Ascending aorta (tissue), 2 donors: ENCODE measurements at regions of chr16 and their contacts with region 1.

Region 1: GRCh38 chr16:77599793-77600415 is 122.4 kb upstream of the NUDT7 start:
- DNase-seq: no peak
- H3K4me3 ChIP-seq: no peak overlapping the region
- H3K27ac ChIP-seq: no peak overlapping the region
- H3K4me1 ChIP-seq: no peaks in the 10 kb centered on the region
- H3K27me3 ChIP-seq: no peaks in the 10 kb centered on the region
- CTCF ChIP-seq: peak in 2 of 3 experiments; percentile 20 to 59

Region 2: GRCh38 chr16:77647726-77648125 is 47.8 kb after region 1 on chr16:
- intact Hi-C with region 1: no loop called
- DNase-seq: no peak
- H3K4me3 ChIP-seq: no peak overlapping the region
- H3K27ac ChIP-seq: no peak overlapping the region
- H3K4me1 ChIP-seq: no peaks in the 10 kb centered on the region
- H3K27me3 ChIP-seq: no peaks in the 10 kb centered on the region
- CTCF ChIP-seq: no peak

Region 3: DNA sequence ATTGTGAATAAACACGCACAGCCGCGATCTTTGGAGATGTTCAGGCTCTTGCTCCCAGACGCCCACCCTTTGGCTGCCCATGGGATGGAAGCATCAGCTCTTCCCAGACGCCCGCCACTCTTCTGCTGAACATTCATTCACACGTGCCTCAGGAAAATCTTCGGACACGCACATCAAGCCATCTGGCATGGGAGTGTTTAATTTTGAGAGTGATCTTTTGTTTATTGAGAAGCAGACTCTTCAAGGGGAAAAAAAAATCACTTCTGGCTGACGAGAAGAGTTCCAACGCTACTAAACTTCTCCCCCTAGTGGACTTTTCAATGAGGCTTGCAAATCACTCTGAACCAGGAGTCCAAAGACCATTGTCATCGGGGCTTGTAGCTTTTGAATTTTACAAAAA is 60.4 kb after region 1 on chr16:
- intact Hi-C with region 1: loop called (anchors 2 kb)
- DNase-seq: no peak
- H3K4me3 ChIP-seq: peak overlapping the region in 1 of 2 donors; percentile 40
- H3K27ac ChIP-seq: no peak overlapping the region
- H3K4me1 ChIP-seq: no peaks in the 10 kb centered on the region
- H3K27me3 ChIP-seq: no peaks in the 10 kb centered on the region
- CTCF ChIP-seq: peak; percentile 31 to 78 (median 49)